GM23248 (cell line): ENCODE measurements at regions of chr22 and their contacts with region 1.

Region 1: GRCh38 chr22:25048659-25049647 is 96.4 kb downstream of the KIAA1671 start:
- DNase-seq: peak; percentile 69
- H3K4me3 ChIP-seq: no peak overlapping the region
- H3K27ac ChIP-seq: no peak overlapping the region
- H3K4me1 ChIP-seq: no peaks in the 10 kb centered on the region
- H3K27me3 ChIP-seq: peaks cover 4% of the 10 kb centered on the region

Region 2: GRCh38 chr22:24758164-24758799 is 290.7 kb before region 1 on chr22:
- in situ Hi-C with region 1: no loop called
- DNase-seq: peak; percentile 66
- H3K4me3 ChIP-seq: no peak overlapping the region
- H3K27ac ChIP-seq: no peak overlapping the region
- H3K4me1 ChIP-seq: no peaks in the 10 kb centered on the region
- H3K27me3 ChIP-seq: peaks cover 46% of the 10 kb centered on the region

Region 3: GRCh38 chr22:24920029-24920428 is 128.9 kb before region 1 on chr22:
- in situ Hi-C with region 1: no loop called
- DNase-seq: no peak
- H3K4me3 ChIP-seq: no peak overlapping the region
- H3K27ac ChIP-seq: no peak overlapping the region
- H3K4me1 ChIP-seq: no peaks in the 10 kb centered on the region
- H3K27me3 ChIP-seq: no peaks in the 10 kb centered on the region

Region 4: GRCh38 chr22:24948356-24949202 is 100.4 kb before region 1 on chr22:
- in situ Hi-C with region 1: loop called (anchors 5 kb)
- DNase-seq: peak; percentile 17
- H3K4me3 ChIP-seq: no peak overlapping the region
- H3K27ac ChIP-seq: no peak overlapping the region
- H3K4me1 ChIP-seq: 0 out of 2 replicates have a peak, but pooled peaks cover 3% of the 10 kb centered on the region
- H3K27me3 ChIP-seq: peaks cover 19% of the 10 kb centered on the region; the same call in 1 of the 2 replicates

Region 5: GRCh38 chr22:25179250-25179631 is 130.3 kb after region 1 on chr22:
- in situ Hi-C with region 1: no loop called
- DNase-seq: no peak
- H3K4me3 ChIP-seq: no peak overlapping the region
- H3K27ac ChIP-seq: no peak overlapping the region
- H3K4me1 ChIP-seq: no peaks in the 10 kb centered on the region
- H3K27me3 ChIP-seq: 0 out of 2 replicates have a peak, but pooled peaks cover 3% of the 10 kb centered on the region

Region 6: DNA sequence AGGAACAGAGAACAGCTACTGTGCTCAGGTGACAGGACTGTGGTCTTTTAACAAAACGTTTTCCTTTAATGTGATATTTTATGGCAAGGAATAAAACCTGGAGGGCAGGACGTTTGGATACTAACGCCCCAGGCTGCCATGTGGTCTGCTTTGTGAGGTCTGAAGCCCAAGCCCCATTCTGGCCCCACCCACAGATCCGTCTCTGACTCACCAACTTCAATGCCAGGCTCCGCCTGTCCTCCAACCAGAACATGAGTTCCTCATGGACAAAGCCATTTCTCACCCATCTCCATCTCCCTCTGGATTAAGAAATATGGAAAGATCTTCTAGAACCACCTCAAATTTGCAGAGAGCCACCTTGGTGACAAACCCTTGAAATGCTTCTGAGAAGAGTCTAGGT is 319.3 kb after region 1 on chr22:
- in situ Hi-C with region 1: no loop called
- DNase-seq: peak; percentile 84
- H3K4me3 ChIP-seq: no peak overlapping the region
- H3K27ac ChIP-seq: no peak overlapping the region
- H3K4me1 ChIP-seq: 0 out of 2 replicates have a peak, but pooled peaks cover 6% of the 10 kb centered on the region
- H3K27me3 ChIP-seq: no peaks in the 10 kb centered on the region